Activated CD4-positive, alpha-beta memory T cell treated with anti-CD3 and anti-CD28 coated beads for 36 hours (primary cell): ENCODE measurements at regions of chr10 and their contacts with region 1.

Region 1: DNA sequence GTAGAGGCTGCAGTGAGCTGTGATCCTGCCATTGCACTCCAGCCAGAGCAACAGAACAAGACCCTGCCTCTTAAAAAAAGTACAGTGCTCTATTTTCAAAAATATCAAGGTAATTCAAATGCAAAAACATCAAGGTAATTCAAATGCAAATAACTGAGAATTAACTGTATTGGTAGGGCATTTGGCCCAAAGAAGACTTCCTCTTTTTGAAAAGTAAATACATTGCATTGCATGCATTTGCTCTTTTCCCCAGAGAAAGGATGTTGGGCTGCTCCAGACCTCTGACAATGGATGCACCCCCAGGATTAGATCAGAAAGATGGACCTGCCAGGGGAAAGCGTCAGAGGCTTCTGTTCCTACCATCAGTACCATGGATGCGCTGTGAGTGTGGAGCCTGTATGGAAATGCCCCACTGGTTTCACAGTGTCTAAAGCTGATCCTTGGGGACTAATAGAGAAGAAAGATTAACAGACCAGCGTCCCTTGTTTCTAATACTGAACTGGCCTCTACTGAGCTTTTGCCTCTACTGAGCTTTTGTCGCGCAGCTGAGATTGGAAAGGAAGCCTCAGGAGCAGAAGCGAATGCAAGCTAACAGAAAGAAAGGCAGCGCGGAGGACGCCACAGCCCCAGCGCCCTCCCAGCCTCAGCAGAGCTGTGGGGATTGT is 93.5 kb upstream of the LYZL2 start:
- DNase-seq: no peak
- H3K4me3 Mint-ChIP-seq: no peak overlapping the region
- H3K27ac Mint-ChIP-seq: no peak overlapping the region
- H3K4me1 Mint-ChIP-seq: peaks cover 7% of the 10 kb centered on the region
- H3K27me3 Mint-ChIP-seq: no peaks in the 10 kb centered on the region

Region 2: GRCh38 chr10:30639946-30640786 is 82.9 kb before region 1 on chr10:
- CTCF ChIA-PET with region 1: interaction called, 22 read pairs
- POLR2A ChIA-PET with region 1: no interaction called
- intact Hi-C with region 1: no loop called
- DNase-seq: no peak
- H3K4me3 Mint-ChIP-seq: no peak overlapping the region
- H3K27ac Mint-ChIP-seq: no peak overlapping the region
- H3K4me1 Mint-ChIP-seq: peaks cover 10% of the 10 kb centered on the region
- H3K27me3 Mint-ChIP-seq: peaks cover 42% of the 10 kb centered on the region

Region 3: GRCh38 chr10:30671026-30671616 is 52.0 kb before region 1 on chr10:
- CTCF ChIA-PET with region 1: interaction called, 32 read pairs
- POLR2A ChIA-PET with region 1: no interaction called
- intact Hi-C with region 1: no loop called
- DNase-seq: no peak
- H3K4me3 Mint-ChIP-seq: peak overlapping the region; percentile 49
- H3K27ac Mint-ChIP-seq: peak overlapping the region; percentile 52
- H3K4me1 Mint-ChIP-seq: peaks cover 31% of the 10 kb centered on the region
- H3K27me3 Mint-ChIP-seq: peaks cover 17% of the 10 kb centered on the region

Region 4: GRCh38 chr10:30680908-30681307 is 42.2 kb before region 1 on chr10:
- CTCF ChIA-PET with region 1: interaction called, 65 read pairs
- POLR2A ChIA-PET with region 1: no interaction called
- intact Hi-C with region 1: no loop called
- DNase-seq: no peak
- H3K4me3 Mint-ChIP-seq: no peak overlapping the region
- H3K27ac Mint-ChIP-seq: peak overlapping the region; percentile 92
- H3K4me1 Mint-ChIP-seq: peaks cover 69% of the 10 kb centered on the region
- H3K27me3 Mint-ChIP-seq: peaks cover 15% of the 10 kb centered on the region

Region 5: DNA sequence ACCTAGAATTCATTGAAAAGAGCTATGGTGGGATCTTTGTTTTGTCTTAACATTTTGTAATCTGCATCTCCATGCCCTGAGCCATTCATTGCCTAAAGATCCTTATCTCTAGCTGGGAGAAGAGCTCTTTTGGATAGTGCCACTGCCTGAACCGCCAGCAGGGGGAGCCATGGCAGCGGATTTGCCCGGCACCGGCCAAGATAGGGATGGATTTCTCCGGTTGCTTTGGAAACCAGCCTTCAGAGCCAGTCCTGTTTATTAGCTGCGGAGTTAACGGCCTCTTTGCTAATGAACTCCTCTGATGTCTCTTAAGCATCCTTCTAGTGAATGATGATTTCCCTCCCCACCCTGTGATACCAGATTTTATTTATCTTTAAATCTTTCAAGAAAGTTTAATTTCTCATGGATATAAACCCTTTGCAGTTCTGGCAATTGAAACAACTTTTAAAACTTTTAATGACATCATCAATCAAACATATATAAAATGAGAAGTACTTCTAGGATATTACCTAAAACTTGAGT is 35.3 kb before region 1 on chr10:
- CTCF ChIA-PET with region 1: interaction called, 65 read pairs
- POLR2A ChIA-PET with region 1: no interaction called
- intact Hi-C with region 1: loop called (anchors 1 kb)
- DNase-seq: peak; percentile 89
- H3K4me3 Mint-ChIP-seq: no peak overlapping the region
- H3K27ac Mint-ChIP-seq: peak overlapping the region; percentile 78
- H3K4me1 Mint-ChIP-seq: peaks cover 71% of the 10 kb centered on the region
- H3K27me3 Mint-ChIP-seq: peaks cover 7% of the 10 kb centered on the region

Region 6: GRCh38 chr10:30709229-30709628 is 13.9 kb before region 1 on chr10:
- CTCF ChIA-PET with region 1: interaction called, 10 read pairs
- POLR2A ChIA-PET with region 1: interaction called, 3 read pairs
- intact Hi-C with region 1: no loop called
- DNase-seq: peak; percentile 30
- H3K4me3 Mint-ChIP-seq: no peak overlapping the region
- H3K27ac Mint-ChIP-seq: no peak overlapping the region
- H3K4me1 Mint-ChIP-seq: peaks cover 36% of the 10 kb centered on the region
- H3K27me3 Mint-ChIP-seq: no peaks in the 10 kb centered on the region

Region 7: GRCh38 chr10:30759423-30759822 is 36.3 kb after region 1 on chr10:
- CTCF ChIA-PET with region 1: no interaction called
- POLR2A ChIA-PET with region 1: no interaction called
- intact Hi-C with region 1: no loop called
- DNase-seq: no peak
- H3K4me3 Mint-ChIP-seq: no peak overlapping the region
- H3K27ac Mint-ChIP-seq: no peak overlapping the region
- H3K4me1 Mint-ChIP-seq: peaks cover 2% of the 10 kb centered on the region
- H3K27me3 Mint-ChIP-seq: no peaks in the 10 kb centered on the region

Region 8: DNA sequence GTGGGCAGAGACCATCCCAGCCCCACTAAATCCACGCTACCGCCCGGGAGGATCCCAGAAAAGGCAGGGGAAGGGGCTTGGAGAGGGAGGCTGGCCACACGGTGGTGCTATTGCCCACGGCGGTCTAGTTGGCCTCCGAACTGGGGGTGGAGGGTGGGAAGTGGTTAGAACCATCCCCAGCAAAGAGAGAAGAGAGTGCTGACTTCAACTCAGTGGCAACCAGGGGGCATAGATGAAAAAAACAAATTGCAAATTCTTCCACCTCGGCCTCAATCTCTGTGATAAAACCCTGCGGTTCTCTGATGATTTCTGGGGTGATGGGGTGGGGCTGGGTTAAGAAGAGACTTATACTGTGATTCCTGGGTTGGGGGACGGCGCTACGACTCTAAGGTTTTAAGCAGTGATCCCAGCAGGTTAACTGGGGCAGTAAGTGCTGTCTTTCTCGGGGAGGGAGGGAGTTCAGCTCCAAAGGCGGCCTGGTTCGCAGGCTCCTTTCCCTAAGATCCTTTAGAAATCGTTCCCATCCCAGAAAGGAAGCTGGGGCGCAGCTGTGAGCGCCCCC is 60.9 kb after region 1 on chr10:
- CTCF ChIA-PET with region 1: interaction called, 6 read pairs
- POLR2A ChIA-PET with region 1: no interaction called
- intact Hi-C with region 1: loop called (anchors 2 kb)
- DNase-seq: peak; percentile 91
- H3K4me3 Mint-ChIP-seq: peak overlapping the region; percentile 62
- H3K27ac Mint-ChIP-seq: peak overlapping the region; percentile 45
- H3K4me1 Mint-ChIP-seq: peaks cover 18% of the 10 kb centered on the region
- H3K27me3 Mint-ChIP-seq: no peaks in the 10 kb centered on the region